ENCODE measurements at regions of chr2 and their contacts with region 1.

Region 1: DNA sequence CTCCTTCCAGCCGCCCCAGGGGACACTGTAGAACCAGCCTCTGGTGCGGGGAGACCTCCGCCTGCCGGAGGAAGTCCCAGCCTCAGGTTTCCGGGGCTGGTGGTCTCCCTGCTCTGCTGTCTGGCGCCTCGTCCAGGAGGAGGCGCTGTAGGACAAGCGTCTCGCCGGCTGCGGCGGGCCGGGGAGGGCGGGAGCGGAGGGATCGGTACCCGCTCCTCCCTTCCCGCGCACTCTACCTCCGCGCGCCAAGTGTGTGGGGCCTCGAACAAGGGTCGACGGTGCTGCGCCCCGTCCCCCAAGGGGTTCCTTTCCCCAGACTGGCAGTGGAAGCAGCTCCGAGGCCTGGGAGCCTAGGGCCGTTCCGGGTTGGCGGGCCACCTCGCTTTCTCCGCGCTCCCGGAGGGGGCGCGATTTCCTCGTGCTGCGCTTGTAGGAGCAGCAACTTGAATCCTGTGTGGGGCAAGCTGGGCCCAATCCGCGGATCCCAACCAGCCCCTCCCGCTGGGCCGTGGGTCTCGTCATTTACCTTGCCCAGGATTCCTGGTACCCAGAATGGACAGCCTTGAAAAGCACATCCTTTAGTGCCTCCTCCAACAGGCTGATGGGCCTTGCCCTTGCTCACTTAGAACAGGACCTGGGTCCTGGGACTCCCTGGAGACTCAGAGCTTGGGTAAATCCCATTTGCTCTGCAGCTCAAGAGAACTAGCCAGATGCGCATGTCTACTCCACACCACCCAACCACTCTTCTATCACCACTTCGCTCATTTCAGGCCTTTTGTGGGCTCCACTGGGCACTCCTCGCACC is 10.6 kb upstream of the HOXD4 start:
- DNase-seq: peak; percentile 73
- ATAC-seq: peak; percentile 92 to 93

Region 2: DNA sequence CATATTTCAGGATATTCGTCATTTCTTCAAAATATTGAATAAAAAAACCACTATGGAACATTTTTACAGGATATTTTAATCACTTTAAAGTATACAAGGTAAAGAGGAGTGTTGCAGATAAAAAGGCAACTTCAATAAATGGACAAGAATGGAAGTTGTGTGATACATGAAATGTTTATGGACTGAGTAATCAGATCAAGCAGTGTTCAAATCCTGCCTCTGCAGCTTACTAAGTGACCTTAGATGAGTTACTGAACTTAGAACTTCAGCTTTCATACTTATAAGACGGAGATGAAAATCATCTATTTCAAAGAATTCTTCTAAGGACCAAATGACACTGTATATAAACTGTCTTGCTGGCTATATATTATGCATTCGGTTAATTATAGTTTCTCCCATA is 225.9 kb before region 1 on chr2:
- intact Hi-C with region 1: no loop called
- DNase-seq: no peak
- ATAC-seq: no peak

Region 3: GRCh38 chr2:175990099-175990498 is 150.6 kb before region 1 on chr2:
- intact Hi-C with region 1: no loop called
- DNase-seq: peak; percentile 18
- ATAC-seq: peak; percentile 36 to 61

Region 4: DNA sequence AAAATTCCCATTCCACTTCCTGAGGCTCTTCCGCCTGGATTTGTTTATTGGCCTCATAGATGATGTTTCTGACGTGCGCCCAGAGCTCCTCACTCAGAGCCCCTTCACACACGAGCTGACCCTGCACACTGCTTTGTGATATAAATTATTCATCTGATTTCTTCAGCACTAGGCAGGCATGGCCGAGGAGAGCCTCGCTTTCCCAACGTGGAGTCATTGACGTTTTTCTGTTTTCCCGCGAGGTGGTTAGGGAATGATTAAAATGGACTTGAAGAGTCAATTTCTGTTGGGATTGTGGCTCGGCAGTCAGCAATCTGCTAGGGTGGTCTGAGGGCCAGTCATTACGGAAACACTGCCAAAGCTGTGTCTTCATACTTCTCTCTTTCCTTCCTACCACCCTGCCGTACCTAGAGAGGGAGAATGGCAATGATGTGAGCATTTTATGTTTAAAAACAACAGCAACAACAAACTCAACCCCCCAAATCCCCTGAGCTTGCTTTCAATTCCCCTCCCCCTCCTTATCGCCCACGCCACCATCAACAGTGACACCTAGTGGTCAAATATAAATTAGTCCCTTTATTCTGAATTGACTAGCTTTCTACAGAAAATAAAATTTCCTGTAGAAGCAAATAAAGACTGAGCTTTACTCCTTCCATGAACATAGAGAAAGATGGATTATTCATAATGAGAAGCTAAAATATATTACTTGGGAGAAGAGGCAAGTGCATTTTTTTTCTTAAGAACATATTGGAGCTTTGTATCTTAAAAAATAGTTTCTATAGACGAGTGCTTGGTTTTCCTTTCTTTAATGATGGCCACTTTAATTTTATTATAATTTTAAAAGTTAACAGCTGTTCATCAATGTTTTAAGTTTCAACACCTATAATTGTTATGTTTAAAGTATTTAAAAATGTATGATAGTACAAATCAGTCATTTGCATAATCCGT is 413.7 kb after region 1 on chr2:
- intact Hi-C with region 1: loop called (anchors 2 to 5 kb)
- DNase-seq: peak; percentile 28
- ATAC-seq: peak; percentile 66 to 72

Region 5: GRCh38 chr2:176638167-176639015 is 497.7 kb after region 1 on chr2:
- intact Hi-C with region 1: loop called (anchors 5 kb)
- DNase-seq: peak; percentile 74
- ATAC-seq: peak; percentile 94 to 95

Measured in left cardiac atrium (tissue), 4 donors.